Activated CD8-positive, alpha-beta T cell treated with anti-CD3 and anti-CD28 coated beads, Interleukin-2, amount 10 ng/mL, durations not matched to agents 7 days and 5 days (primary cell): ENCODE measurements at regions of chr9 and their contacts with region 1.

Region 1: GRCh38 chr9:105881654-105882349 is 187.5 kb downstream of the TMEM38B start:
- DNase-seq: peak; percentile 86
- ATAC-seq: peak; percentile 63
- H3K4me3 Mint-ChIP-seq: no peak overlapping the region
- H3K27ac Mint-ChIP-seq: no peak overlapping the region
- H3K4me1 Mint-ChIP-seq: peaks cover 44% of the 10 kb centered on the region
- H3K27me3 Mint-ChIP-seq: peaks cover 20% of the 10 kb centered on the region

Region 2: DNA sequence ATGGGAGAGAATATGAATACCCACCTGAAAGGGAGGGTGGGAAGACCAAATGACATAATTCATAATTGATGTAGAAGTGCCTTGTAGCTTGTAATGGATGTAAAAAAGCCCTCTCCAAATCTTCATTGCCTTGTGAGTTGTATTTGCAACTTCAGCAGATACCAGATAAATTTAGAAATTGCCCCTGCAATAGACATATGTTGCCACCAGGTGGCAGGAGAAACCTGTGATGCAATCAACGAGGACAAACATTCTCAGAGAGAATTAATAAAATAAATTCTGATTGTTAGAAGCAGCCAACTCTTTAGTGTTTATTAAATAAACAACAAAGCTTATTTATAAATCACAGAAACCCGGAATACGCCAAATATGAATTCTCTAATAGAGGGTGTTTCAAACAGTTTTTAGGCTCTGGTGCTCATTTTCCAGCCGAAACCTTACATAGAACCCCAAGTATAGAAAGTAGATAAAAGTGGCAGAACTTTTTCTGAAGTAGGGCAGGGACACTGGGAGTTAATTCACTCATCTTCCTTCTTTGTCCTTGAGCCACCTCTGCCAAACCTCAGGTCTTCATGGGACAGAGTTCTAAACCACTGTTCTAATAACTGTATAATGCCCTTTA is 39.7 kb before region 1 on chr9:
- CTCF ChIA-PET with region 1: interaction called, 245 read pairs
- POLR2A ChIA-PET with region 1: interaction called, 3 read pairs
- DNase-seq: peak; percentile 57
- ATAC-seq: no peak
- H3K4me3 Mint-ChIP-seq: no peak overlapping the region
- H3K27ac Mint-ChIP-seq: no peak overlapping the region
- H3K4me1 Mint-ChIP-seq: no peaks in the 10 kb centered on the region
- H3K27me3 Mint-ChIP-seq: no peaks in the 10 kb centered on the region

Region 3: GRCh38 chr9:105850852-105851500 is 30.8 kb before region 1 on chr9:
- CTCF ChIA-PET with region 1: interaction called, 245 read pairs
- POLR2A ChIA-PET with region 1: no interaction called
- DNase-seq: no peak
- ATAC-seq: no peak
- H3K4me3 Mint-ChIP-seq: no peak overlapping the region
- H3K27ac Mint-ChIP-seq: no peak overlapping the region
- H3K4me1 Mint-ChIP-seq: no peaks in the 10 kb centered on the region
- H3K27me3 Mint-ChIP-seq: peaks cover 9% of the 10 kb centered on the region

Region 4: GRCh38 chr9:105858006-105858690 is 23.7 kb before region 1 on chr9:
- CTCF ChIA-PET with region 1: interaction called, 57 read pairs
- POLR2A ChIA-PET with region 1: interaction called, 5 read pairs
- DNase-seq: peak; percentile 65
- ATAC-seq: peak; percentile 83
- H3K4me3 Mint-ChIP-seq: peak overlapping the region; percentile 29
- H3K27ac Mint-ChIP-seq: peak overlapping the region; percentile 83
- H3K4me1 Mint-ChIP-seq: peaks cover 27% of the 10 kb centered on the region
- H3K27me3 Mint-ChIP-seq: peaks cover 21% of the 10 kb centered on the region

Region 5: GRCh38 chr9:105864248-105864898 is 17.4 kb before region 1 on chr9:
- CTCF ChIA-PET with region 1: interaction called, 12 read pairs
- POLR2A ChIA-PET with region 1: no interaction called
- DNase-seq: no peak
- ATAC-seq: no peak
- H3K4me3 Mint-ChIP-seq: no peak overlapping the region
- H3K27ac Mint-ChIP-seq: no peak overlapping the region
- H3K4me1 Mint-ChIP-seq: peaks cover 6% of the 10 kb centered on the region
- H3K27me3 Mint-ChIP-seq: peaks cover 29% of the 10 kb centered on the region